Left cardiac atrium (tissue), 4 donors: ENCODE measurements at regions of chr2 and their contacts with region 1.

Region 1: GRCh38 chr2:231104115-231104713 is 20.6 kb downstream of the HTR2B start:
- DNase-seq: peak; percentile 34
- ATAC-seq: peak; percentile 84 to 87

Region 2: DNA sequence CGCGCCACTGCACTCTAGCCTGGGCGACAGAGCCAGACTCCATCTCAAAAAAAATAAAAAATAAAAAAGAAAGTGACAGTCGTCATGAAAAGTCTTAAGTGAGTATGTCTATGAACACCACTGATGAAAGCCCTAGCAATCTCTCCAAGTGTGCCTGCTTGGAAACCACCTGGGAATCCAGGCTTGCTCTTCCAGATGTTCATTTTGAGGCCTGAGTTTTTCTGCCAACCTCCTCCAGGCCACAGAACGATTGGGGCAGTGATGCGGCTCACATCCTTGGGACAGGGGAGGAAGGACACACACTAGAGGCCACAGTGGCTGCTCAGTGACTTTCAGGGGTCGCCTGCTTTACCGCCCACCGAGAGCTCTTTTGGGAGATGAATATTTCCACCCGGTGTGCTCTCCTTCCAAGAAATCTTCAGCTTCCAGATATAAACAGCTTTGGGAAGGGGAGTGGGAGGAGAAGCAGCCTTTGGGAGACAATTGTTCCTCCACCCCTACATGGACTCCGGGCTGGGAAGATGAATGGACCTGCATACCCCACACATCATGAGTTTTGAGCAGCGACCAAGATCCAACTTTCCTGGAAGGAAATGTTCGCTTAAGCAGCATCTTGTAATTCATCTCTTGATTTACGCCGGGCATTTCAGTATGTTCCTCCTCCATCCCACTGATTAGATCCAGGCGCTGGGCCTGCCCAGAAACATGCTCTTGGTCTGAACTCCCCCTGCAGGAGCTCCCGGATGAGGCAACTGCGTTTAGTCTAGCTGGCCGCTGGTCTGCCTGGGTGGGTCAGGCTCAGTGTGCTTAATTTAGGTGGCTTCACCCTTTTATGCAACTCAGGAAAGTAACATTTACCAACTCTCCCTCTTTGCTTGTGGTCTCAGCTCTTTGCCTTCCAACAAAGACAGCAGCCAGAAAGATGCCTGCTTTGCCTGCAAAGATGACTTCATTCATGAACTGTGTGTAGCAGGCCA is 88.0 kb after region 1 on chr2:
- intact Hi-C with region 1: loop called (anchors 5 to 10 kb)
- DNase-seq: peak; percentile 88
- ATAC-seq: peak; percentile 61 to 63

Region 3: DNA sequence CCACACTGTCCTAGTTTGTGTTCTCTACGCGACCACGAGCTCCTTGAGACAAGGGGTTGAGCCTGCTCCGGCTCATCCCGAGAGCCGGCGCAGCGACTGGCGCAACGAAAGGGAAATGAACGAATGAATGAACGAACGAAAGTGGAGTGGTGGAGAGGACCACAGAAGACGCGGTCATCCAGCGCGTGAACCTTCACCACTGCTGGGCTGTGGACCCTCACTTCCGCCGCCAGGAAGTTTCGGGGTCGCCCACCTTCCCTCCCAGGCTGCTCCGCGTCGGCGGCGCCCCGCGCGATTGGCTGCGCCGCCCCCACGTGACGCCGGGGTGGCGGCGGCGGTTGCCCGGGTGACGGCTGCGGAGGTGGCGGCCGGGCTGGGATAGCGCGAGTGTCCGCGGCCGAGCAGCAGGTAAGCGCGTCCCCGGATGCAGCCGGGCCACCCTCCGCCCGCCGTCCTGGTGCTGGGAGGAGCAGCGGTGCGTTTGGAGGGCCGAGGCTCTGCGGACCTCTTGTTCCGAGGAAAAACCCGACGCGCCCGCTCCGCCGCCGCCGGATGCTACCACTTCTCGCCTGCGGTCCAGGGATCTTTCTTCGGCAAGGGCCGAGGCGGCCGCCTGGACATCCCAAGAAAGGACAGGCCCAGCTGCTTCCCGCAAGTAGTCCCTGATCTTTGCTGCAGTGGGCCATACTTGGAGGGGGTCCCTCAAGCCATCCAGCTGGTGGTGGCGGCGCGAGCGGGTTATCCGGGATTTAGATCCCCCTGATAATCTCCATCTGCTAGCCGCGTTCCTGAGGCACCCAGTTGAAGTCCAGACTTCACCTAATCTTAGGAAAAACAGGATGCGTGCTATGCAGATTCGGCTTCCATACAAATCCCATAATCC is 94.3 kb after region 1 on chr2 and contains the start of gene ARMC9:
- intact Hi-C with region 1: loop called (anchors 5 to 10 kb)
- DNase-seq: peak; percentile 79
- ATAC-seq: peak; percentile 98 to 99
- total RNA-seq, gene ARMC9: 3.0 to 5.9 TPM

Region 4: DNA sequence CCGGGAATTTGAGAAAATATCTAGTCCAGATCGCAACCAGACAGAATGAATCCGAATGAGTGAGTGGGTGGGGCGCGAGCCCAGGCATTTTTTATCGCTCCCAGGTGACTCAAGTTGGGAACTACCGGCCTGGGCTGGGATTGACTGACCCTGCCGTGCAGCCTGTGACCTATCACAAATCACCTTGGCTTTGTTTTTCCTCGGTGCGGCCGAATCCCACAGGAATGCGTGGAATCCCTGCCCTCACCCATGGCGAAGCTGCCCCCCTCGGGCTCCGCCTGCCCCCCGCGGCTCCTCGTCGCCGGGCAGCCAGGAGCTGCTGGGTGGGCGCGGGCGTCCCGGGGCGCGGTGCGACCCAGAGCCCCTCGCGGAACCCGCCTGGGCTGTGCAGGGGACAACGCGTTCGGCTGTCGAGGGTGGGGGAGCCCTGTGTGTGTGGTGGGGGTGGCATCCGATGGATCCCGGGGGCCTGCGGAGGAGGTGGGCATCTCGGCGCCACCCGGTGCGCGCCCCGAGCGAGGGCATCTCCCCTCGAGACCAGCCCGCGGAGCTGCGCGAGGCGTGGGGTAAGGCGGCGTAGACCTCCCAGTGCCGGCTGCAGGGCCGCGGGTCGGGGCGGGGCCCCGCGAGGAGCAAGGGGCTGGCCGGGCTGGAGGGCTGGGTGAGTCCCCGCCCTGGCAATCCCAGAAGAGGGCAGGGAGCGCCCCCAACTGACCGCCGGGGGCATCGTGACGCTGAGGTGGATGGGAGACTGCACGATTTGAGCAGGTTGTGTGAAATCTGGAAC is 307.8 kb after region 1 on chr2:
- intact Hi-C with region 1: loop called in 1 of 2 experiments (anchors 5 kb)
- DNase-seq: peak; percentile 89
- ATAC-seq: peak; percentile 99 to 100

Region 5: GRCh38 chr2:231452799-231453508 is 348.7 kb after region 1 on chr2:
- intact Hi-C with region 1: loop called (anchors 5 to 10 kb)
- DNase-seq: no peak
- ATAC-seq: peak; percentile 9 to 13